ENCODE measurements at regions of chr12 and their contacts with region 1.

Region 1: GRCh38 chr12:68040450-68041075 is 51.3 kb downstream of the IFNG-AS1 start:
- DNase-seq: peak; percentile 29 to 72
- H3K4me3 ChIP-seq: no peak overlapping the region
- H3K4me1 ChIP-seq: no peaks in the 10 kb centered on the region
- H3K27me3 ChIP-seq: no peaks in the 10 kb centered on the region

Region 2: DNA sequence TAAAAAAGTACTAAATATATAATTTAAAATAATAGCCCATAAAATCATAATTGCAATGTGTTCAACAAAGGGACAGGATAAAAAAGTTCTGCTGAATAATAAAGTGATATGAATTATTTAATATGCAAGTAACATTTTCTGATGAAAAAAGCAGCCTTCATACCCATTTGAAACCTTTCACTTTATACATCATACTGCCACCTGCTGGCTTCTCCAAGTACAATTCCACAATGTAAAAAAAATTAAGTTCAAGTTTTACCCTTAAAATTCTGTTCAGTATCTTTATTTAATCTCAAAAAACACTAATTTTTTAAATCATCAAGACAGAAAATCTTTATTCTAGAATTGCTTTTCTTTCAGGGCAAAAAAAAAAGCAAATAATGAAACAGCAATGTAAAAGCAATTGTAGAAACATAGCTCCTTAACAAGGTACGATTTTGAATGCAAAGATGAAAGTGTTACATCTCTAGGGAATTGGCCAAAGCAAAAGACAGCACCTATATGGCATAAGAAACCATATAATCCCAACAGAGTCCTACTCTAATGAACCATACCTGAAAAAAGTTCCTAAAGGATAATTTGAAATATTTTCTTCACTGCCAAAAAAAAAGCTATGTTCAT is 276.6 kb after region 1 on chr12:
- in situ Hi-C with region 1: loop called (anchors 25 kb)
- DNase-seq: peak; percentile 48 to 54
- H3K4me3 ChIP-seq: no peak overlapping the region
- H3K4me1 ChIP-seq: no peaks in the 10 kb centered on the region
- H3K27me3 ChIP-seq: no peaks in the 10 kb centered on the region

Region 3: GRCh38 chr12:68358532-68359485 is 318.2 kb after region 1 on chr12:
- in situ Hi-C with region 1: no loop called
- DNase-seq: peak; percentile 54 to 62
- H3K4me3 ChIP-seq: no peak overlapping the region
- H3K4me1 ChIP-seq: no peaks in the 10 kb centered on the region
- H3K27me3 ChIP-seq: no peaks in the 10 kb centered on the region; the same call in 1 of the 2 replicates

Region 4: GRCh38 chr12:68686595-68687521 is 646.3 kb after region 1 on chr12 and contains the start of gene NUP107:
- in situ Hi-C with region 1: loop called (anchors 25 kb)
- DNase-seq: peak; percentile 98 to 99
- H3K4me3 ChIP-seq: peak within 1 kb of the TSS; percentile 92
- H3K4me1 ChIP-seq: peaks cover 25% of the 10 kb centered on the region
- H3K27me3 ChIP-seq: no peaks in the 10 kb centered on the region